Left ventricle myocardium superior (tissue), 1 donor: ENCODE measurements at regions of chr17 and their contacts with region 1.

Region 1: GRCh38 chr17:80978499-80979497 is 12.8 kb upstream of the CHMP6 start:
- DNase-seq: no peak
- ATAC-seq: no peak

Region 2: DNA sequence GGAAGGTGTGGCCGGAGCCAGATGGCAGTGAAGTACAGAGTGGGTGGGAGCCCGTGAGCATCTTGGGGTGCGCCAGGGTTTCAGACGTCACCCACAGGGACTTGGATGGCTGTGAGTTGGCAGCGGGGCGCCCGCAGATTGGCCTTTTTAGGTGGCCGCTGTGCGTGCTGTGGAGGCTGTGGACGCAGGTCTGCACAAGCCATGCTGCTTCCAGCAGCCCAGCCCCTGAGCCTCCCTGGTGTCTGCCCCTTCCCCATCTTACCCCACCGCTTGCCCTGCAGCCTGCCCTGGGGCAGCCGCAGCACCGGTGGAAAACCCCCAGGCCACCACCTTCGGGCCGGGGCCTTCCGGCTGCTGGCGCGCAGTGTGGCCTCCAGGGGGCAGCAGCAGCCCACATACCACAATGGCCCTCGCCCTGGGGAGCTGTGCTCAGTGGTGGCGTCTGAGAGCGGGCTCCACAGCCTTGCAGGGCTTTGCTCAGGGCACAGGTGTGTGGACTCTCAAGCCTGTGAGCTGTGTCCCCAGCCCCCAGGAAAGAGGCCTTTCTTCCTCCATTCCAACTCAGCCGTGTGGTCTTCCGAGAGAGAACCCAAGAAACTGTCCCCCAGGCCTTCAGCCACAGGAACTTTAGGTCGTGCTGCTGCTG is 552.0 kb before region 1 on chr17:
- intact Hi-C with region 1: loop called (anchors 5 kb)
- DNase-seq: peak; percentile 84
- ATAC-seq: peak; percentile 86